WTC11 (cell line): ENCODE measurements at regions of chr11 and their contacts with region 1.

Region 1: GRCh38 chr11:76318744-76319384 is 62.1 kb downstream of the THAP12 start:
- DNase-seq: peak; percentile 94
- ATAC-seq: peak; percentile 88
- H3K4me3 Mint-ChIP-seq: no peak overlapping the region
- H3K27ac Mint-ChIP-seq: no peak overlapping the region
- H3K4me1 Mint-ChIP-seq: peaks cover 24% of the 10 kb centered on the region
- H3K27me3 Mint-ChIP-seq: peaks cover 41% of the 10 kb centered on the region
- CTCF ChIP-seq: peak; percentile 93

Region 2: DNA sequence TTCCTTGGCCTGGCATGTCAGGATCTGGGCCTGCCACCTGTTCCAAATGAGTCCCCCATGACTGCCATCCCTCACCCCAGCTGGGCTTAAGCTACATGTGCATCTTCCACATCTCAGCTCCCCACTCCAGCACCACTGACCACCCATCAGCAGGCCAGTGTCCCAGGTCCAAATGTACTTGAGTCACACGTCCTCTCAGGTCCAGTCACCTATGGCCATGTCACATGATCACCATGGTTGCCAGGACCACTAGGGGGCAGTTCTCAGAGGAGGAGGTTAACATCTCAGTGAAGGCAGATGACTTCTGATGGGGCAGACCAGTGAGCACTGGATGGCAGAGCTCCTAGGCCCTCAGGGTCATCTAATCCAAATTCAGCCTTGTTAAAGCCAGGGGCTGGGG is 70.7 kb before region 1 on chr11:
- CTCF ChIA-PET with region 1: interaction called, 19 read pairs
- POLR2A ChIA-PET with region 1: no interaction called
- DNase-seq: peak; percentile 52
- ATAC-seq: peak; percentile 55
- H3K4me3 Mint-ChIP-seq: no peak overlapping the region
- H3K27ac Mint-ChIP-seq: no peak overlapping the region
- H3K4me1 Mint-ChIP-seq: peaks cover 14% of the 10 kb centered on the region
- H3K27me3 Mint-ChIP-seq: peaks cover 18% of the 10 kb centered on the region
- CTCF ChIP-seq: peak; percentile 25; the same call in 1 of the 2 replicates

Region 3: DNA sequence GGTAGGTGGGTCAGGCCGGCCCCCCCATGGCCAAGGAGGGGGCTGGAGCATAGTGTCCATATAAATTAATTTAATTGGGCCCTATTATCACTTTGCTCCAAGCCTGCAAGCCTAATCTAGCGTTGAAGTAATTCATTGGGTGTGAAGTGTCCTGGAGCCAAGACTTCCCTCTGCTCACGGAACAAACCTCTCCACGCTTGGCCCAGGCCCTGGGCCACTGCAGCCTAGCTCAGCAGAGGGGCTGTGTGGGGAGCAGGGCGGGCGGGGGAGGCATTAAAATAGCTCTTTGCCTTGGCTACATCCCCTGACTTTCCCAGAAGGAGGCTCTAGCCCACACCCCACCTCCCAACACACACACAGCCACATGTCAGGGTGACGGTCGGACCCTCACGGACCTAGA is 11.5 kb before region 1 on chr11:
- CTCF ChIA-PET with region 1: interaction called, 17 read pairs
- POLR2A ChIA-PET with region 1: no interaction called
- DNase-seq: no peak
- ATAC-seq: peak; percentile 48
- H3K4me3 Mint-ChIP-seq: no peak overlapping the region
- H3K27ac Mint-ChIP-seq: no peak overlapping the region
- H3K4me1 Mint-ChIP-seq: peaks cover 16% of the 10 kb centered on the region
- H3K27me3 Mint-ChIP-seq: no peaks in the 10 kb centered on the region
- CTCF ChIP-seq: no peak

Region 4: DNA sequence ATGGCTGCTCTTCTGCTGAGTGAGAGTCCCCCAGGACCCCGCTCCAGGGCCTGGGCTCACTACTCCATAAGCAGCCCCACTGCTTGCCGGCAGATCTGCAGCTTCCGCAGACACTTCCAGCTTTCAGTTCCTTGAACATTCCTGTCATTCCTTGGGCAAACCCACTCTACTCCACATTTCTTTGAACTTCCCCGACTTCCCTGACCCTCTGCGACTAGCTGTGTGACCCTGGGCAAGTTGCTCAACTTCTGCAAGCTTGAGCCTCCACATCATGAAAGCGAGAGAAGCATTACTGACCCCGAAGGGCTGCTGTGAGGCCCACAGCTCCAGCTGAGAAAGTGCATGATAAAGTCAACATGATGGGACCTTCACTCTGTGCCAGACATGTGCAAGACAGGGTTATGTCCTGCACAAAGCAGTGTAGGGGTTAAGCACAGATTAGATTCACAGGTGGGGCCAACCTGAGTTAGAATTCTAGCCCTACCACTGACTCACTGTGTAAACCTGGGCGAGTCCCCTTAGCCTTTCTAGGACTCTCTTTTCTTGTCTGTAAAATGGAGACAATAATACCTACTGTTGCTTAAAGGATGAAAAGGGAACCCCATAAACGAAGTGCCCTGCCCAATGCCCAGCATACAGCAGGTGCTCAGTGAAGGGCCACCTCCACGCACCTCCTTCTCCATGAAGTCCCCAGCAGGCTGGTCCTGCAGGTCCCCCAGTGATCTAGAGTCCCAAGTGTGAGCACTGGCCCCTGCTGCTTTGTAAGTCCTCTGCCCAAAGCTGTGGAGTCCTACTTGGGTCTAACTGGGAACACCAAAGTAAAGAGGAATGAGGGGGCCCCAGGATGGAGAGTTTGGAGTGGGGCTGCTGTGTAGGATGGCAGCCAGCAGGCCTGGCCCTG is 10.5 kb after region 1 on chr11:
- CTCF ChIA-PET with region 1: interaction called, 12 read pairs
- POLR2A ChIA-PET with region 1: no interaction called
- DNase-seq: peak; percentile 22
- ATAC-seq: peak; percentile 79
- H3K4me3 Mint-ChIP-seq: no peak overlapping the region
- H3K27ac Mint-ChIP-seq: no peak overlapping the region
- H3K4me1 Mint-ChIP-seq: peaks cover 11% of the 10 kb centered on the region
- H3K27me3 Mint-ChIP-seq: peaks cover 4% of the 10 kb centered on the region
- CTCF ChIP-seq: no peak

Region 5: DNA sequence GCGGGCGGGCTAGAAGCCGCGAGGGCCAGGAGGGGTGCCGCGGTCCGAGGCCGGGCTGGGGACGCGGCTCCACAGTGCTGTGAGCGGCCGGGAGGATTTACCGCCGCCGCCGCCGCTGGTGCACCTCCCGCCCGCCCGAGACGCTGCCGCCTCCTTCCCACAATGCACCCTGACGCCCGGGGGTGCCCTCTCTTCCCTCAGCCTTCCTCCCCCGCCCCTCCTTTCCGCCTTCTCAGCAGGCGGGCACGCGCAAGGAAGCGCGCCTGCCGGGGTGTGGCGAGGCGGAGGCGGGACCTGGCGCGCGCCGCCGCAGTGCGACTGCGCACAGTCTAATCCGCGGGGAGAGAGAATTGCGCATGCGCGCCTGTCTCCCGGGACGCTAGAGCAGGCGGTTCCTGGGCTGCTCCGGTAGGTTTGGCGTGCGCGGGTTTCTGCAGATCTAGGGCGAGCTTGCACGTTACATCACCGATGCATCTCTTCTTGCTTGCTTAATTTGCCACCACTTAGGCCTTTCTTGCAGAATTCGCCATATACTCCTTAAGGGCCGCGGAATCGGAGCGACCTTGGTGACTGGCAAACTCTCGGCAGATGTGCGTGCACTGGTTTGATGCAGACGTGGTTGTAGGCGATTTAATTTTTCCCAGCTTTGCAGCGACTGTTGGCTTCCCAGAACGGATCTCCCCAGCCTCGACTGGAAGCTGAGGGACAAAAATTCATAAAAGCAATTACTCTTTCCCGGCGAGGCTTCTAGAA is 62.3 kb after region 1 on chr11 and contains the starts of genes GVQW3 and THAP12:
- CTCF ChIA-PET with region 1: no interaction called
- POLR2A ChIA-PET with region 1: no interaction called
- DNase-seq: peak; percentile 97
- ATAC-seq: peak; percentile 89
- H3K4me3 Mint-ChIP-seq: peak within 1 kb of the TSS; percentile 96
- H3K27ac Mint-ChIP-seq: peak within 1 kb of the TSS; percentile 84
- H3K4me1 Mint-ChIP-seq: peaks cover 45% of the 10 kb centered on the region
- H3K27me3 Mint-ChIP-seq: peaks cover 3% of the 10 kb centered on the region; the same call in 1 of the 2 replicates
- CTCF ChIP-seq: no peak
- total RNA-seq, gene GVQW3: 7.0 to 8.1 TPM (median 7.7 TPM) in 3 replicates
- total RNA-seq, gene THAP12: 26.9 to 27.6 TPM (median 27.4 TPM) in 3 replicates

Region 6: DNA sequence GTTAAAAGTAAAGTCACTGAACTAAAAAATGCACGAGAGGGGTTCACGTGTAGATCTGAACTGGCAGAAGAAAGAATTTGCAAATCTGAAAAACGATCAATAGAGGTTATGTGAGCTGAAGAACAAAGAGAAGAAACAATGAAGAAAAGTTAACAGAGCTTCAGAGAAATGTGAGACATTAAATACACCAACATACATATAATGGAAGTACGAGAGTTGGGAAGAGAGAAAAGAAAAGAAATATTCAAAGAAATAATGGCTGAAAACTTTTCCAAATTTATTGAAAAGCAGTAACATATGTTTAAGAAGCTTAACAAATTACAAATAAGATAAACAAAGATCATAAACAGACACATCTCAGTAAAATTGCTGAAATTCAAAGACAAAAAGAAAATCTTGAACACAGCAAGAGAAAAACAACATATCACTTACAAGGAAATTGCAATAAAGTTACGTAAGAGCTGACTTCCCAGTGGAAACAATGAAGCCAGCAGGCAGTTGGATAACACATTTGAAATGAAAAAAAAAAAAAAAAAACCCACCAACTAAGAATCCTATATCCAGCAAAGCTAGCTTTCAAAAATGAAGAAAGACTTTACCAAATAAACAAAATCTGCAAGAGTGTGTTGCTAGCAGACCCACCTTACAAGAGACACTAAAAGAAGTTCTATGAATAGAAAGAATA is 182.8 kb after region 1 on chr11:
- CTCF ChIA-PET with region 1: no interaction called
- POLR2A ChIA-PET with region 1: no interaction called
- DNase-seq: no peak
- ATAC-seq: no peak
- H3K4me3 Mint-ChIP-seq: no peak overlapping the region
- H3K27ac Mint-ChIP-seq: no peak overlapping the region
- H3K4me1 Mint-ChIP-seq: no peaks in the 10 kb centered on the region
- H3K27me3 Mint-ChIP-seq: no peaks in the 10 kb centered on the region
- CTCF ChIP-seq: no peak